Posterior cingulate gyrus (tissue), 11 donors: ENCODE measurements at regions of chr13 and their contacts with region 1.

Region 1: DNA sequence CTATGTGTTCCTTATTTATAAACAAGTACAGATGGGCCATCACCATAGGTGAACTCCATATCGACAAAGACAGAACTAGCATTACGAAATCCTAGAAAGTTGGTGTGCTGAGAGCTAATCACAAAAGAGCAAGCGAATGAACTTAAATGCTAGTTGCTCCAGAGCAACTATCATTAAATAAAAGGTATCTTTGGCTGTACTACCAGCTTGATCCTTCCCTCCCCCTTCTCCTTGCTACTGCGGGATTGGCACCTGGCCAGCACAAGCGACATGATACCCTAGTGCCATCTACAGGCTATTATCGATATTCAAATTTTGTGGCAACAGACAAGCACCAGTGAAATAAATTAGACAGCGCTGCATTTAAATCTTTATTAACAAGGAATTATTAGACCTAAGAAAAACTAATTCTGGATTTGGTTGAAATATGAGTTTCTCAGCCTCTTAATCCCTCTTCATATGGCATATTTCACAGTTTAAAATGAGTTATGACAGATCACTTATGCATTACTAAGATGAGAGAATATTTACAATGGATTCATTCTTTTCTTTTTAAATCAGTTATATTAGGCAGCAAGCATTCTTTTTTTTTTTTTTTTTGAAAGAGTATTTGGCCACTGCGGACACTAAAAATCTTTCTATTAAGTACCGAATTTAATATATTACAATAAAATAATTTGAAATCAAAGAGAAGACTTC is 5.8 kb downstream of the PCDH9 start:
- DNase-seq: peak; percentile 73 to 96 (median 82)

Region 2: DNA sequence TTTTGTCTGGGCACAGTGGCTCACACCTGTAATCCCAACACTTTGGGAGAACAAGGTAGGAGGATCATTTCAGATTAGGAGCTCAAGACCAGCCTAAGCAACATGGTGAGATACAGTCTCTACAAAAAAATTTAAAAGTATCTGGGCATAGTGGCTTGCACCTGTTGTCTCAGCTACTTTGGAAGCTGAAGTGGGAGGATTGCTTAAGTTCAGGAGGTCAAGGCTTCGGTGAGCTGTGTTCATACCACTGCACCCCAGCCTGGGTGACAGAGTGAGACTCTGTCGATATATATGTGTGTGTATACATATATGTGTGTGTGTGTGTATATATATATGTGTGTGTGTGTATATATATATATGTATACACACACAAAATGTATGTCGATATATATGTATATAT is 827.2 kb before region 1 on chr13:
- intact Hi-C with region 1: no loop called
- DNase-seq: no peak

Region 3: DNA sequence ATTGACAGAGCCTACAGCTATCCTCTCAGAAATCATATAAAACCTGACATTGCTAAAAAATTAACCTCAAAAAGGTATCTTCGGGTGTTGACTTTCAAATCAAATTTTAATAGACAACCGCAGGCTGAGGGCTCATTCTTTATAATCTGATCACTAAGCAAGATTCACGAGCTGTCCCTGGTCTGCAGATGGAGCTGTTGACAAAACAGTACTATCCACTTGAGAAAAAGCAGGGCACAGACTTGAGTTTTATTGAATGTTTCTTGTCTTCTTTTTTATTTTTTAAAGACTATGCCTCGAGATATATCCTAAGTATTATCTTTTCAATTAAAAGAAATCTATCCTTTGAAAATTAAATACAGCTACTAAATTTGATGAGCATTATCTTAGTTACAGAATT is 534.7 kb before region 1 on chr13:
- intact Hi-C with region 1: loop called (anchors 5 kb)
- DNase-seq: peak in 3 of 10 donors; percentile 16 to 29 (median 28)

Region 4: GRCh38 chr13:66887088-66887487 is 337.2 kb before region 1 on chr13:
- intact Hi-C with region 1: loop called (anchors 10 kb)
- DNase-seq: no peak

Region 5: DNA sequence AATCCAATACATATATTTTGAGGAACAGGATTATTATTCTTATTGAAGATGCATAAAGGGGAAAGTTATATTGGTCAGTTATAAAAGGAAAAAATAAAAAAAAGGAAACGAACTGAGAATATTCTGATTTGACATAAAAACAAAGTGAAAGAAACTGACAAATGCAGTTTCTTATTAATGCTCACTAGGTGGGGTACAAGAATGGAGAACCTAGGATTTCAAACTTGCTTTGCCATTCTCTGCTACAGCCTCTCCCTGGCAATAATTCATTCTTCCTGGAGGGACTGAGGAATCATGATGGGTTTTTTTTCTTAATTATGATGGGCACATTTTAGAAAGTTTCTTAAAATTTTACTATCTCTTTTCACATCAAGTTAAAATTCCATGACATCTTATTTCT is 149.1 kb before region 1 on chr13:
- intact Hi-C with region 1: loop called (anchors 5 kb)
- DNase-seq: no peak